Left cardiac atrium (tissue), 4 donors: ENCODE measurements at regions of chr12 and their contacts with region 1.

Region 1: DNA sequence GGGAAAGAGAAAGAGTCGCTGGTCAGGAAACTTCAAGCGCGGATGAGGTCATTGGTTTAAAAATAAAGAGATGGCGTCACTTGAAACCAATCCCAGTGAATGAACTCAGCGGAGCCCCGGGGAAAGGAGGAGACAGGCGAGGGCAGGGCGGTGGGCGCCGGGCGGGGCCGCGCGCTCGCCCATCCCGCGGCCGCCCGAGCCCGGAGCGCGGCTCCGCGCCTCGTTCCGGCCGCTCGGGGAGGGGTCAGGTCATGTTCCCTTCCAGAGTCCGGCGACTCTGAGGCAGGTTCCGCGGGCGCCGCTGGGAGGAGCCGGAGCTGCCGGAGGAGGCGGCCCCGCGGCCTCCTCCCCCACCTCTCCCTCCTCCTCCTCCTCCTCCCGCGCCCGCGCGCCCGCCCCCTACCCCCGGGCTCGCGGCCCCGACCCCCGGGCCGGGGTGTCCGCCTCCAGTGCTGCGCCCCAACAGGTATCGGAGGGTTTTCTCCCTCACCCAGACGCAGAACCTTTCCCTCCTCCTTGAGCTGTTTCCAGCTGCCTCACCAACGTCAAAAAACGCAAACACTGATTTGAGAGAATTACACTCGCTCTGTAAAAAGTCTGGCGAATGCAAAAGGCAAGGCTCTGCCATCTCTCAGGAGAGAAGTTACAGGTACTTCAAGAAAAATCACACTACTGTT is at the start of gene DUSP16:
- DNase-seq: peak; percentile 94
- ATAC-seq: peak; percentile 96 to 98
- total RNA-seq, gene DUSP16: 11.5 to 17.3 TPM

Region 2: DNA sequence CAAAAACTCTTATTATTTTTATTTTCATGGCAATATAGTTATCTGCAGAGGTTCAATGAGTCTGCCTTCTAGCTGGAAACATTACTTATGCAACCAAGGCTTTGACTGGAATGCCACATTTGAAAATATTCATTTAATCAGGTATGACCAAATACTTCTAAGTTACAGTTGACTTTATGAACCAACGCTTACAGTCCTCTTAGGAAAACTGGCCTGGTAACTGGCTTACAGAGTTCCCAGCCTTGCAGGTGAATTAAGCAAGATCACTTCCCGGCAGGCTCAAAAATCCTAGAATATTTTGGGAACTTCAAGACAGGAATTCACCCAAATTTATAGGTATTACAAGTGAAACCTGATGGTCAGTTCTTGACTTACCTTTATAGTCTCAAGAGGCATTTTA is 308.2 kb before region 1 on chr12:
- intact Hi-C with region 1: no loop called
- DNase-seq: no peak
- ATAC-seq: no peak

Region 3: GRCh38 chr12:12376646-12377448 is 185.9 kb before region 1 on chr12:
- intact Hi-C with region 1: loop called (anchors 2 to 5 kb)
- DNase-seq: no peak
- ATAC-seq: peak; percentile 81 to 84

Region 4: DNA sequence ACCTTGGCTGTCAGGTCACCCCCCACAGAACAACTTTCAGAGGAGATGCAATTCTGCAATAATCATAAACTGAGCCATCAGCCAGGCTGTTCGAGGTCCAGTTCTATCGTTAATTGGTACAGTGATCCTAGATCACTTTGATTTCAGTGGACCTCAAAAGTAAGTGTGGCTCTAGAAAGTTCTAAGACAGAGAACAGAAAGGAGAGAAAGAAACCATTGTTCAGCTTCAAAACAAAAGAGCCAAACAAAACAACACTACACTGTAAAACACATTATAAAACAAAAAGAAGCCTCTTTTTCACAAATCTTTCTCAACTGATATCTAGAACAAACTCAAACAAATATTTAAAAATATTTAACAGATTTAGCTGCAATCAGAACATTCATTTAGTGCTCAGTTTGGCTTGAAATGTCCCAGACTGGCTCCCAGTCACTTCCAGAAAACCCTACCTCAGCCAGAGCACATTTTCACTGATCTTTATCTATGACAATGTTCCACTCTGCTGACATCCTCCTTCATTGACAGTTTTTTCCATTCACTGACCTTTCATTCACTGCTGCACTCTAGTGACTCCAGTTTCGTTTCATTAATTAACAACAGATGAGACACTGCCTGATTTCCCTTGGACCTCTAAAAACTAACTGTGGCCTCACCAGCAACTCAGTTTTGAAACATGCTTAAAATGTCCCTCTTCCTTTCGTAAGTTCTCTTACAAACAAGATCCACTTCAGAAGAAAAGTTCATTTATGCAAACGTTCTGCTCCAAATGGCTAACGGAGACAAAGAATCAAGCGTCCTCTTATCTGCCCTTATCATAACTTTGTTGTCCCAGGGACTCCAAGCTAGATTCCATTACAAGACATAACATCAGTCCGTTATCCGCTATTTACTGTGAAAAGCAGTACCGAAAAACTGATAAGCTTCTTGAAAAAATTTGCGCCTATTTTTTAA is 56.9 kb before region 1 on chr12:
- intact Hi-C with region 1: loop called in 1 of 2 experiments (anchors 5 kb)
- DNase-seq: no peak
- ATAC-seq: peak; percentile 64 to 85

Region 5: GRCh38 chr12:12527820-12528296 is 34.9 kb before region 1 on chr12:
- intact Hi-C with region 1: no loop called
- DNase-seq: no peak
- ATAC-seq: no peak

Region 6: DNA sequence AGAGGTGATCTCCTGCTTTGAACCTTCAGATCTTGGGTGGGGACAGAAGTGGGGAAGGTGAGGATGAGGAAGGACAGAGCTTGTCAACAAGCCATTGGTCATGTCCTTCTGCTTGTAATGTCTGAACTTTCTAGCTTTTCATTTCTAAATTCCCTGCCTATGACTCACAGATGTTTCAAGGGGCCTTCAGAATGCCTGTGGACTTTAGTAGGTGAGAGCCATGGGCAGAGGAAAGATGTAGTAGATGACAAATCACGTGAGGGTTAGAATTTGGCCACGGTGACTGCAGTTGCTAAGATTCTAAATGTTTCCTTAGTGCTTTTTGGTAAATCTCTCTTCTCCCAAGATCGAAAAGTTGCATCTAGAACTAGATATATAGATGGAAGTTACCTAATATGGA is 30.2 kb after region 1 on chr12:
- intact Hi-C with region 1: no loop called
- DNase-seq: no peak
- ATAC-seq: no peak

Region 7: GRCh38 chr12:12611512-12612306 is 49.0 kb after region 1 on chr12 and contains the start of gene CREBL2:
- intact Hi-C with region 1: loop called in 1 of 2 experiments (anchors 2 kb)
- DNase-seq: peak; percentile 95
- ATAC-seq: peak; percentile 96 to 97
- total RNA-seq, gene CREBL2: 20.4 to 21.0 TPM

Region 8: DNA sequence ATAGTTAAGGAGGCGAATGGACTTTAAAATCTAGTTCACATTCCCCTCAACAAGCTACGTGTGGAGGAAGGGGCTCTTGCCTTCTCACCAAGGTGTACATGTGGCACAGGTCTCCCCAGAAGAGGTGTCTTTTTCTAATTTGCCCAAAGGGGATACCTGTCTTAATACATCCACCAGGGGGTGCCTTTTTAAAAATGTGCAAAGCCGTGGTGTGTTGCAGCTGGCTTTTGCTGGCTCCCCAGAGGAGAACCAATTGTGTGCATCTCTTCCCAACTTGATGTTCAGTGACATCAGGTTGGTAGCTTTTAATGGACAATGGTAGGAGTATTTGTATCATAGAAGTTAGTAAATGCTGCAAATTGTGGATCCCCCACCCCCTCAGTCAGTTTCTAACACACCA is 82.8 kb after region 1 on chr12:
- intact Hi-C with region 1: no loop called
- DNase-seq: no peak
- ATAC-seq: peak in 1 of 2 donors; percentile 38

Region 9: GRCh38 chr12:12704593-12705230 is 142.0 kb after region 1 on chr12:
- intact Hi-C with region 1: loop called in 1 of 2 experiments (anchors 10 kb)
- DNase-seq: peak; percentile 56
- ATAC-seq: peak; percentile 100